Right cardiac atrium (tissue), 5 donors: ENCODE measurements at regions of chr10 and their contacts with region 1.

Region 1: GRCh38 chr10:52729271-52730104 is 43.1 kb downstream of the MBL2 start:
- DNase-seq: no peak
- ATAC-seq: peak in 1 of 2 donors; percentile 45
- H3K4me3 ChIP-seq: peak overlapping the region; percentile 6
- H3K27ac ChIP-seq: no peak overlapping the region
- H3K4me1 ChIP-seq: no peaks in the 10 kb centered on the region
- H3K27me3 ChIP-seq: no peaks in the 10 kb centered on the region

Region 2: GRCh38 chr10:52644373-52645186 is 84.9 kb before region 1 on chr10:
- intact Hi-C with region 1: loop called in 3 of 4 experiments (anchors 2 to 5 kb)
- DNase-seq: peak in 2 of 3 donors; percentile 20 to 44
- ATAC-seq: peak; percentile 62
- H3K4me3 ChIP-seq: no peak overlapping the region
- H3K27ac ChIP-seq: no peak overlapping the region
- H3K4me1 ChIP-seq: no peaks in the 10 kb centered on the region
- H3K27me3 ChIP-seq: no peaks in the 10 kb centered on the region

Region 3: GRCh38 chr10:52801947-52802346 is 72.5 kb after region 1 on chr10:
- intact Hi-C with region 1: no loop called
- DNase-seq: no peak
- ATAC-seq: no peak
- H3K4me3 ChIP-seq: no peak overlapping the region
- H3K27ac ChIP-seq: no peak overlapping the region
- H3K4me1 ChIP-seq: no peaks in the 10 kb centered on the region
- H3K27me3 ChIP-seq: no peaks in the 10 kb centered on the region